CD4-positive, alpha-beta memory T cell (primary cell): ENCODE measurements at regions of chr1 and their contacts with region 1.

Region 1: DNA sequence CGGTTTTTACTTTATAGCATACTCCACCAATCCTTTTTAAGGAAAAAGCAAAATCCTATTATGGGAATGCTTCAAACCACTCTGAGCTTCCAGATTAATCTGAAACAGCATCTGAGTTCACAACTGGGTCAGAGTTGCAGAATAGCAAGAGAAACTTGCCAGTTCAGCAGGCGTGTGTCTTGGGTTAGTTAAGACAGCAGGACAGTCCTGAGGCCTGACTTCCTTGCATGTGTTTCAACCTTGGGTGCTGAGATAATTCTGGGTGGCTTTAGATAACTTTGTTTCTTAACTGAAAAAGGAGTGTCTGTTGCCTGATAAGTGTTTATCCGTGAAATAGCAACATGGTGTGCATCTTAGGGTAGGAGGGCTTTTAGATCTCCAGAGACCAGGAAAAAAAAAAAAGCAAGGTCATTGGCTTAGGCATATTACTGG is 169.2 kb downstream of the DHRS3 start:
- DNase-seq: no peak
- H3K4me3 ChIP-seq: peak overlapping the region in 1 of 2 donors; percentile 13
- H3K4me3 Mint-ChIP-seq: peak overlapping the region in 7 of 8 donors; percentile 67 to 92 (median 84)
- H3K27ac ChIP-seq: no peak overlapping the region
- H3K27ac Mint-ChIP-seq: peak overlapping the region in 6 of 7 donors; percentile 90 to 98 (median 92)
- H3K4me1 ChIP-seq: peaks cover 67% of the 10 kb centered on the region
- H3K4me1 Mint-ChIP-seq: peaks cover 50 to 84% (median 61%) of the 10 kb centered on the region in 4 donors
- H3K27me3 ChIP-seq: no peaks in the 10 kb centered on the region
- H3K27me3 Mint-ChIP-seq: no peaks in the 10 kb centered on the region

Region 2: GRCh38 chr1:11671544-11672286 is 777.0 kb before region 1 on chr1:
- CTCF ChIA-PET with region 1: no interaction called
- POLR2A ChIA-PET with region 1: no interaction called
- intact Hi-C with region 1: no loop called
- DNase-seq: no peak
- H3K4me3 ChIP-seq: no peak overlapping the region
- H3K4me3 Mint-ChIP-seq: no peak overlapping the region
- H3K27ac ChIP-seq: no peak overlapping the region
- H3K27ac Mint-ChIP-seq: no peak overlapping the region
- H3K4me1 ChIP-seq: no peaks in the 10 kb centered on the region
- H3K4me1 Mint-ChIP-seq: peaks cover 0 to 2% (median 0%) of the 10 kb centered on the region in 4 donors
- H3K27me3 ChIP-seq: no peaks in the 10 kb centered on the region
- H3K27me3 Mint-ChIP-seq: no peaks in the 10 kb centered on the region

Region 3: GRCh38 chr1:12166834-12167492 is 281.8 kb before region 1 on chr1 and contains the start of gene TNFRSF1B:
- CTCF ChIA-PET with region 1: no interaction called
- POLR2A ChIA-PET with region 1: no interaction called
- intact Hi-C with region 1: no loop called
- DNase-seq: peak; percentile 57 to 75 (median 63)
- H3K4me3 ChIP-seq: peak within 1 kb of the TSS; percentile 85 to 93
- H3K4me3 Mint-ChIP-seq: peak within 1 kb of the TSS; percentile 100
- H3K27ac ChIP-seq: peak within 1 kb of the TSS; percentile 88
- H3K27ac Mint-ChIP-seq: peak within 1 kb of the TSS; percentile 99 to 100 (median 99)
- H3K4me1 ChIP-seq: peaks cover 85% of the 10 kb centered on the region
- H3K4me1 Mint-ChIP-seq: peaks cover 43 to 81% (median 65%) of the 10 kb centered on the region in 4 donors
- H3K27me3 ChIP-seq: no peaks in the 10 kb centered on the region
- H3K27me3 Mint-ChIP-seq: no peaks in the 10 kb centered on the region
- total RNA-seq, gene TNFRSF1B: 111 TPM

Region 4: DNA sequence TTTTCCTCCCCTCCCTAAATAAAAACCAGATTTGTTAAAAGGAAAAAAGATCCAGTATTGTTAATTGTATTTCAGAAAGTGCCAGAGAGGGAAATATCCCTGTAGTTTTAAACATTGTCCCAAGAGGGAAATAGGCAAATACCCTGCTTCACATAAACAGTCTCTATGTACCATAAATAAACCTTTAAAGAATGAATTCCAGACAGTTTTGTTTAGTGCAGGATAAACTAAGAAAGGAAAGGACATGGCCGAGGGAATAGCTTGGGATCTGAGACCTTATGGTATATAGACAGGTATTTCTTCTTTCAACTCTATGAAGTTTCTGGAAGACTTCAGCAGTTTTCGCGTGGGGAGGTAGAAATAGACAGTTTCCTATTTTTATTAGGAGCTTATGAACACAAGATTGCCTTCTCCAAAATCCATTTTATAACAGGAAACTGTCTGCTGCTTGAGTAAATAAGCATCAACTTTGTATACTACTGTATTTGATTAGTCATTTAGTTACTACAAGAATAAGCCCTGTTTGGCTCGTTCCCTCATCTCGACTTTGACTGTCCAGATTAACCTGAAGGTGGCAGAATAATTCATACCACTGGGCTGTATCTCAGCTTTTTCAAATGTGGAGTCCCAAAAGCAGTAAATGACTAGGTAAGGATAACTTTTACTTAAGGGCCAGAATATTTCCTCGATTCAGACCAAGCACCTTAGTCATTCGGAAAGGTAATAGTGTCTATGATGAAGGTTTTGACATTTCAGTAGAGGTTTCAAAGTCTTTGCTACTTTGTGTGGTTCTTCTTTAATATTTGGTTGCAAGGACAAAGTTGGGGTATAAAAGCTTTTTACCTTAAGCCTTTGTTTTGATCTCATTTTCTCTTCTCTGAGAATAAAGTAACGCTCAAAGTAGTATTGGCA is 41.5 kb before region 1 on chr1:
- CTCF ChIA-PET with region 1: no interaction called
- POLR2A ChIA-PET with region 1: no interaction called
- intact Hi-C with region 1: loop called (anchors 1 kb)
- DNase-seq: peak in 3 of 5 donors; percentile 25 to 31 (median 27)
- H3K4me3 ChIP-seq: no peak overlapping the region
- H3K4me3 Mint-ChIP-seq: no peak overlapping the region
- H3K27ac ChIP-seq: no peak overlapping the region
- H3K27ac Mint-ChIP-seq: peak overlapping the region in 2 of 7 donors; percentile 58 to 72
- H3K4me1 ChIP-seq: no peaks in the 10 kb centered on the region
- H3K4me1 Mint-ChIP-seq: peaks cover 0 to 10% (median 8%) of the 10 kb centered on the region in 4 donors
- H3K27me3 ChIP-seq: no peaks in the 10 kb centered on the region
- H3K27me3 Mint-ChIP-seq: no peaks in the 10 kb centered on the region

Region 5: DNA sequence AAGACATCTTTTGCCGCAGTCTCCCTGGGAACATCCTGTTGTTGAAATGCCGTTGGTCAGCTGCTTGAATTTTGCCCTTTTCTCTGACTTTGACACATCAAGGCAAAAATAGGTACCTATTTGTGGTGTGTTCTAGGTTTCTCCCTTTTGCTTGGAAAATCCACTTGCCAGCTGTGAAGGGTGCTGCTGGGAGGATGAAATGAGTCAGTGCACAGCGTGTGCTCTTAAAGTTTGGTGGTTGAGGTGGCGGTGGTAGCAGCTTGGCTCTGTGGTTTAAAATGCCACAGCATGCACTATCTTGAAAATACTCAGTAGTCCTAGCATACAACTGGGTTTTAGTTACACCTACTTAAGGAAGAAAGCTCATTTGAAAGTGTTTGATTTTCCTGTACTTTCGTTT is 14.6 kb before region 1 on chr1:
- CTCF ChIA-PET with region 1: interaction called, 3 read pairs
- POLR2A ChIA-PET with region 1: interaction called, 74 read pairs
- intact Hi-C with region 1: loop called (anchors 1 kb)
- DNase-seq: peak; percentile 29 to 74 (median 41)
- H3K4me3 ChIP-seq: peak overlapping the region in 1 of 2 donors; percentile 9
- H3K4me3 Mint-ChIP-seq: peak overlapping the region in 7 of 8 donors; percentile 42 to 83 (median 78)
- H3K27ac ChIP-seq: peak overlapping the region; percentile 4
- H3K27ac Mint-ChIP-seq: peak overlapping the region; percentile 83 to 94 (median 90)
- H3K4me1 ChIP-seq: peaks cover 59% of the 10 kb centered on the region
- H3K4me1 Mint-ChIP-seq: peaks cover 47 to 78% (median 57%) of the 10 kb centered on the region in 4 donors
- H3K27me3 ChIP-seq: no peaks in the 10 kb centered on the region
- H3K27me3 Mint-ChIP-seq: no peaks in the 10 kb centered on the region

Region 6: GRCh38 chr1:12472798-12473551 is 24.2 kb after region 1 on chr1:
- CTCF ChIA-PET with region 1: interaction called, 5 read pairs
- POLR2A ChIA-PET with region 1: interaction called, 7 read pairs
- intact Hi-C with region 1: loop called (anchors 2 kb)
- DNase-seq: peak; percentile 30 to 71 (median 45)
- H3K4me3 ChIP-seq: peak overlapping the region in 1 of 2 donors; percentile 23
- H3K4me3 Mint-ChIP-seq: peak overlapping the region; percentile 72 to 85 (median 84)
- H3K27ac ChIP-seq: peak overlapping the region; percentile 51
- H3K27ac Mint-ChIP-seq: peak overlapping the region; percentile 93 to 98 (median 95)
- H3K4me1 ChIP-seq: peaks cover 79% of the 10 kb centered on the region
- H3K4me1 Mint-ChIP-seq: peaks cover 54 to 91% (median 70%) of the 10 kb centered on the region in 4 donors
- H3K27me3 ChIP-seq: no peaks in the 10 kb centered on the region
- H3K27me3 Mint-ChIP-seq: no peaks in the 10 kb centered on the region

Region 7: DNA sequence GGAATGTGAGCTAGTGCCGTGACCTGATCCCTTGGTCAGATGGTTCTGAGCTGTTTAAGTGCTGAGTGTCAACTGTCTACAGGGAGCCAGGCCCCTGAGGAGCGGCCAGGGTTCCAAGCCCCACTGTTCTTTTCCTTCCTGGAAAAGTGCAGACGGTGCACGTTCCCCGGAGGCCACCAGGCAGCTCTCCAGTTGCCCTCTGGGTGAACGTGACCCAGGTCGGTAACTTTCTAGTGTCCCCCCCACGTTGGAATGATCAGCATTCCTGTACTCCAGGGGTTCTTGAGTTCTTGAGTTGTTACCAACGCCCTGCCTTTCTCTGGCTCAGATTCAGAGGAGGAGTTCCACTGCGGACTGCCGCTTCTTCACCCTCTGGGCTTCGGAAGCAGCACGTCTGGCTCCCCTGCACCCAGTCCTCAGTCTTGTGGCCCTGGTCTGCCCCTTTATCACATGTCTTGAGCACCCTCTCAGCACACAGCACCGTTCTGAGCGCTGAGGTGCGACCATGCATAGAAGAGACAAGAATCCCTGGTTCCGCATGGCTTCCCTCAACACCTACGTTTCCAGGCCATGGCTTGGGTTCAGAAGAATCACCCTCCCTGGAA is 37.7 kb after region 1 on chr1:
- CTCF ChIA-PET with region 1: no interaction called
- POLR2A ChIA-PET with region 1: no interaction called
- intact Hi-C with region 1: no loop called
- DNase-seq: no peak
- H3K4me3 ChIP-seq: no peak overlapping the region
- H3K4me3 Mint-ChIP-seq: no peak overlapping the region
- H3K27ac ChIP-seq: no peak overlapping the region
- H3K27ac Mint-ChIP-seq: no peak overlapping the region
- H3K4me1 ChIP-seq: peaks cover 8% of the 10 kb centered on the region
- H3K4me1 Mint-ChIP-seq: peaks cover 5 to 7% (median 5%) of the 10 kb centered on the region in 4 donors
- H3K27me3 ChIP-seq: no peaks in the 10 kb centered on the region
- H3K27me3 Mint-ChIP-seq: no peaks in the 10 kb centered on the region

Region 8: GRCh38 chr1:12518931-12519692 is 70.3 kb after region 1 on chr1:
- CTCF ChIA-PET with region 1: no interaction called
- POLR2A ChIA-PET with region 1: no interaction called
- intact Hi-C with region 1: no loop called
- DNase-seq: no peak
- H3K4me3 ChIP-seq: no peak overlapping the region
- H3K4me3 Mint-ChIP-seq: no peak overlapping the region
- H3K27ac ChIP-seq: no peak overlapping the region
- H3K27ac Mint-ChIP-seq: peak overlapping the region in 3 of 7 donors; percentile 42 to 72 (median 57)
- H3K4me1 ChIP-seq: no peaks in the 10 kb centered on the region
- H3K4me1 Mint-ChIP-seq: peaks cover 10 to 28% (median 16%) of the 10 kb centered on the region in 4 donors
- H3K27me3 ChIP-seq: no peaks in the 10 kb centered on the region
- H3K27me3 Mint-ChIP-seq: no peaks in the 10 kb centered on the region